ENCODE measurements at regions of chr1 and their contacts with region 1.

Region 1: DNA sequence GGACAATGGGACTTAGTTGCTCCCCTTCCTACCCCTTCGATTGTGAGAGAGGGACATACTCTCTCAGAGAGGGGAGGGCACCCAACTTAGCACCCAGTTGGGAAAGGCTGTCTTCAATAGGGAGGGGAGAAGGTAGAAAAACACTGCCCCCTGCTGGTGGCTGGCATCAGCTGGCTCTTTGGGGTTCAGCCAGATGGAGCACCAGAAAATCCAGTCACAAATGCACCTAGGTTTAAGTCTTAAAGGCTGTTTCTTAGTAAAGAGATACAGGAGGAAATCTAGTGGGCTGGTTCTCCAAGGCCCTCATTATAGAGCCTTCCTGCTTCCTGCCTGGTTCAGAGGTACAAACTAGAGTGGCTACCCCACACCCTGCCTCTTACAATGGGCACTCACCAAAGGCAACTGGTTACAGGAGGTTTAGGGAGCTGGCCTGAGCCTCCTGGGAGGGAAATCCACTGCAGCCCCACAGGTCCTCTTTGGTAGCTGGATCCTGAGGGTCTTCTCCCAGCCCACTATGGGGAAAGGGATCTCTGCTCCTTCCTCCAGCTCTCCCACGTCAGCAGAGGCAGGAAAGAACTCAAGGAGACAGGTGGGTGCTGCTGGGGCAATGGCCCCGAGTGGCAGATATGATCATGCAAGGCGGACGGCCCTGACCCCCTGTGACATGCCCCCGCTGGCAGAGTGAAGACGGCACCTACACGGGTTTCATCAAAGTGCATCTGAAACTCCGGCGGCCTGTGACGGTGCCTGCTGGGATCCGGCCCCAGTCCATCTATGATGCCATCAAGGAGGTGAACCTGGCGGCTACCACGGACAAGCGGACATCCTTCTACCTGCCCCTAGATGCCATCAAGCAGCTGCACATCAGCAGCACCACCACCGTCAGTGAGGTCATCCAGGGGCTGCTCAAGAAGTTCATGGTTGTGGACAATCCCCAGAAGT is 28.3 kb downstream of the EIF2D start:
- DNase-seq: peak; percentile 86
- ATAC-seq: peak; percentile 68
- H3K4me3 ChIP-seq: no peak overlapping the region
- H3K27ac ChIP-seq: no peak overlapping the region
- H3K4me1 ChIP-seq: peaks cover 52% of the 10 kb centered on the region
- H3K27me3 ChIP-seq: no peaks in the 10 kb centered on the region
- CTCF ChIP-seq: peak; percentile 100

Region 2: DNA sequence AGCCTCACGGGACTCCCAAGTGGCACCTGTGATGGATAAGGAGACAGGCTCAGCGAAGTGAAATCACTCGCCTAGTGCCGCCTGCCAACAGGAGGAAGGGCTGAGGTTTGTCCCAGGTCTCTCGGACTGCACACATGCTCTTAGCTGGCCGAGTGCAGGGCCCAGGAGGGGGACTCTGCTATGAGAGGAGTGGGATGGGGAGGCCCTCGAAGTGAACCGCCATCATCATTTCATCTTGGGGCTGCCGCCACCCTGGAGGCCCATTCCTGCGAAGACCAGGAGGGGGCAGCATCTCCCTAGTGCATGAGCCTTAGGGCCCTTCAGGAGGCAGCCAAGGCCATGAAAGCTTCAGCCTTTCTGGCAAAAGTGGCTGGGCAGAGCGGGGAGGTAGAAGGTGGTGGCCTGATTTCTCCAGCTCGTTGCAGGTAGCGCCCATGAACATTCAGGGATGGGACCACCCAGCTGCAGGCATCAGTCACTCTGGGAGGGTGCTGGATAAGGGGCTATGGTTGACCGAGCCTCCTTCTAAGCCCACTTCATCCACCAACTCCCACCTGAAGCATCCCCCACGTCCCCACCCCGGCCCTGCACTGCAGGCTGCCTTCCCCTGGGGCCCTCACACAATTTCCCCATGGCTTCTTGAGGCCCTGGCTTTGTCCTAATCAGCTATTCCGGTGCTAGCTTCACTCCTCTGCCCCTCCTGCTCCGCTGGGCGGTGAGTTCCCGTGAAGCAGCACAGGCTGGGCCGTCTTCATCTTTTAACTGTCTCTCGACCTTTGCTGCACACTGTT is 93.8 kb before region 1 on chr1:
- CTCF ChIA-PET with region 1: interaction called, 10 read pairs
- POLR2A ChIA-PET with region 1: no interaction called
- intact Hi-C with region 1: loop called (anchors 1 kb)
- DNase-seq: peak; percentile 93
- ATAC-seq: peak; percentile 98
- H3K4me3 ChIP-seq: no peak overlapping the region
- H3K27ac ChIP-seq: no peak overlapping the region
- H3K4me1 ChIP-seq: no peaks in the 10 kb centered on the region
- H3K27me3 ChIP-seq: no peaks in the 10 kb centered on the region
- CTCF ChIP-seq: peak; percentile 100

Region 3: DNA sequence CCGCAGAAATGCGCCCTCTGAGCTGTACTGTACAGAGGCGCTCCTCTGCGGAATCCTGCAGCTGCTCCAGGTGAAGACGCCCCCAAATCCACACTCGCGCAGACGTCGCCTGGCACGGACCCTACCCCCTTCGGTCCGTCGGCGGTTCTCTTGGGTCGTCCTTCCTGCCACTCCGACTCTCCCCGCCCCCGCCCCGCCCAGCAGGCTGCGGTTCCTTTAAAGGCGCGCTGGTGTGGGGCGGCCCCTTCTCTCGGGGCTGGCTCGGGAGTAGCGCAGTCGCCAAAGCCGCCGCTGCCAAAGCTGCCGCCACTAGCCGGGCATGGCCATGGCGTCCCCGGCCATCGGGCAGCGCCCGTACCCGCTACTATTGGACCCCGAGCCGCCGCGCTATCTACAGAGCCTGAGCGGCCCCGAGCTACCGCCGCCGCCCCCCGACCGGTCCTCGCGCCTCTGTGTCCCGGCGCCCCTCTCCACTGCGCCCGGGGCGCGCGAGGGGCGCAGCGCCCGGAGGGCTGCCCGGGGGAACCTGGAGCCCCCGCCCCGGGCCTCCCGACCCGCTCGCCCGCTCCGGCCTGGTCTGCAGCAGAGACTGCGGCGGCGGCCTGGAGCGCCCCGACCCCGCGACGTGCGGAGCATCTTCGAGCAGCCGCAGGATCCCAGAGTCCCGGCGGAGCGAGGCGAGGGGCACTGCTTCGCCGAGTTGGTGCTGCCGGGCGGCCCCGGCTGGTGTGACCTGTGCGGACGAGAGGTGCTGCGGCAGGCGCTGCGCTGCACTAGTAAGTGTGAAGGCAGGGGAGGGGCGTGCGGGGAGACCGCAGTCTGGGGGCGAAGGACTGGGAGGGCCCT is 76.5 kb before region 1 on chr1 and contains the start of gene RASSF5:
- CTCF ChIA-PET with region 1: interaction called, 7 read pairs
- POLR2A ChIA-PET with region 1: no interaction called
- intact Hi-C with region 1: loop called (anchors 1 kb)
- DNase-seq: peak; percentile 90
- ATAC-seq: peak; percentile 71
- H3K4me3 ChIP-seq: peak within 1 kb of the TSS; percentile 69
- H3K27ac ChIP-seq: no peak within 1 kb of the TSS
- H3K4me1 ChIP-seq: peaks cover 50% of the 10 kb centered on the region
- H3K27me3 ChIP-seq: no peaks in the 10 kb centered on the region
- CTCF ChIP-seq: no peak
- total RNA-seq, gene RASSF5: 15.5 and 16.0 TPM in 2 replicates

Region 4: DNA sequence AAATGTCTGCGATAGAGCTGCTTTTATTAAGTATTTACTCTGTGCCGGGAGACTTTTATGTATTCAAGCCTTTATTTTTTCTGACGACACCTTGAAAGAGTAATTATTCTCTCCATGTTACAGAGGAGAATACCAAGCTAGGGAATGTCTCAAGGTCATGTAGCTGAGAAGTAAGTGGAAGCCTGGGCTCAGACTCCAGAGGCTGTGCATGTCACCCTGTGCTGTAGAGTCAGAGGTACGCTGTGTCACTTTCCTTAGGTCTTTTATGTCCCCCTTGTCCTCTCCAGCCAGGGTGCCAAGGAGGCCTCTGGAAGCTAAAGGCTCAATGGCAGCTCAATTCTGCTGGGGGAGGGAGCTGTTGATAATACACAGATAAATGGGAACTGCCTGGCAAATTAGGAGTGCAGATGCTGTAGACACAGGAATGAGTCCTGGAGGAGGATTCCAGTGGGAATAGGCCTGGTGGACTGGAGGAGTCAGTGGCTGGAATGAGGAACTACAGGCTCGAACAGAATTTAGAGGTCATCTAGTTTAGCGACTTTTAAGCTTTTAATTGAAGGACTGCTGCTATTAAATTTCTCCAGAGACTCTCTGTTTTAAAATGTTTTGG is 177.3 kb after region 1 on chr1:
- CTCF ChIA-PET with region 1: no interaction called
- POLR2A ChIA-PET with region 1: no interaction called
- intact Hi-C with region 1: no loop called
- DNase-seq: no peak
- ATAC-seq: no peak
- H3K4me3 ChIP-seq: no peak overlapping the region
- H3K27ac ChIP-seq: no peak overlapping the region
- H3K4me1 ChIP-seq: peaks cover 13% of the 10 kb centered on the region
- H3K27me3 ChIP-seq: peaks cover 47% of the 10 kb centered on the region
- CTCF ChIP-seq: peak; percentile 40